Posterior vena cava (tissue), 2 donors: ENCODE measurements at regions of chrX and their contacts with region 1.

Region 1: GRCh38 chrX:107029752-107030151 is 29.7 kb upstream of the MORC4 start:
- DNase-seq: no peak

Region 2: DNA sequence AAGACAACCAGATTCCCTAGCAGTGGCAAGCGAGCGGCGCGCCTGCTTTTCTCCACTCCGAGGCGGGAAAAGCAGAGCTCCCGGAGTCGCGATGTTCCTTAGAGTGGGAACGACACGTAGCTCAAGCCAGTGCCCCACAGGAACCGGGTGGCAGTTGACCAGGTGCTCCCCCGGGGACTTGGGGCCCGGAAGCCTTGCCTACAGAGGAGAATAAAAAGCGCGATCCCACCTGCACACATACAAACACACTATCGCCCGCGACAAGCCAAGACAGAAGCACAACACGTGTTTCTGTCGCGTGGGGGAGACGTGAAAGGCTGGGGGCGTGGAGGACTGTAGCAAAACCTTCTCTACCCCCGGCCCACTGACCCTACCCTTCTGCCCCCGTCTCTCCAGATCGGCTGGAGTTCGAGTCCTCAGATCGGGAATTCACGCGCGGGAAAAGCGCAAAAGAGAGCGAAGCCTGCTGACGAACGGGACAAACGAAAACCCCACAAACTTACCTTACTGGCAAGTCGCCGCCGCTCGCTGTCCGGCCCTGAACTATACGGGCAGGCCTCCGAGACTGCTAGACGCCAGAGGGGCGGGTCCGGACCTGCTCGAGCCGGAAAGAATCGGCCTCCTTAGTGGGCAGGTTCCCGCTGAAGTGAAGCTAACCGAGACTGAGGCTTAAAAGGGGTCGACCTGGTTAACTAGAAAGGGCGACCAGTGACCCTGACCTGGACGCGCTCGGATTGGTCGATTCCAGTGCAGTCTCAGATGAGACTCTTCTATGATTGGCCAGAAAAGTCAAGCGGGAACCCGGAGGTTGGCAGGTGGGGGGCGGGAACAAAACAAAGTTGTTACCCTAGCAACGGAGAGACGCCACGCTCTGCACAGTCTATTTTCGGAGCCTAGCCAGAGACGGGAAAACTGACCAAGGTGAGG is 176.3 kb after region 1 on chrX and contains the starts of genes DNAAF6 and NUP62CL:
- intact Hi-C with region 1: no loop called
- DNase-seq: no peak
- total RNA-seq, gene DNAAF6: not detected
- total RNA-seq, gene NUP62CL: 0.14 TPM in 1 of 2 donors, not detected in the other

Region 3: DNA sequence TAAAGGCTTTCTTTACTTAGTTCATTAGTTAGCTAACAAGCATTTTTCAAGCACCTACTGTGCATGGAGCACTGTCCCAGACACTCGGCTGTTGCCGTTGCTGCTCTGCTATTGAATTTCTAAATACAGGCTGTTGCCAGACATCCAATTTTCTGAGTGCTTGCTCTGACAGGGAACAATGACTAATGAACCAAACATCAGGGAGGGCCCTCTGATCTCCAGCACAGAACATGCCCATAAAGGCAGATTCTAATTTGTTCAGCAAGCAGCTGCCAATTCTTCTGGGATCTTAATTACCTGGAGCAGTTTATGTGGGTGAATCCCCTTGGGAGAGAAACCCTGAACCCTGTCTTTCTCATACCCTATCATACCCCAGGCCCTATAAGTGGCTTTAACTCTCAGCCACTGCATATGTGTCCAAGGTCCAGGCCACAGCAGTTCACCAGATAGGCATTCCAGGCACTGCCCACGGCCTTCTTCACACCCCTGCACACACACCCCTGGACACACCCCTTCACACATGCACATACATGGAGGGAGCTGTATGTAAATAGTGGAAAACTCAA is 717.9 kb after region 1 on chrX:
- intact Hi-C with region 1: loop called in 1 of 2 experiments (anchors 5 kb)
- DNase-seq: no peak

Region 4: GRCh38 chrX:108186811-108187210 is 1157.1 kb after region 1 on chrX:
- intact Hi-C with region 1: no loop called
- DNase-seq: no peak